Pancreas (tissue), 10 donors: ENCODE measurements at regions of chr2 and their contacts with region 1.

Region 1: DNA sequence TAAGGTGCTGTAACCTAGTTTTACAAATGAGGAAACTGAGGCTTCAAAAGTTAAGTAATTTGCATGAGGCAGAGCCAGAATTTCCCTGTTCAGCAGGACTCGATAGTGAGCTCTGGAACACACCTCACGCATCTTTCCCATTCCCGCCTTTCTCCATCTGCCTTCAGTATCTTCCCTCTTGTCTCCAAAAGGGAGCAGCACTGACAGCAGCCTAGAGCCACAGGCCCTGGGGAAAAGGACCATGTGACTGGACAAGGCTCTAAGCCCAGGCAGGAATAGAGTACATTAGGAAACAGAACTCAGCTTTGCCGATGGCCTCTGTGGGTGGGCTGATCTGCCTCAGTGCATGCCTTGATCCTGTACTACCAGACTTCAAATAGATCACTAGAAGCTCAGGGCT is 21.5 kb downstream of the GPR155 start:
- DNase-seq: no peak
- ATAC-seq: no peak
- H3K4me3 ChIP-seq: no peak overlapping the region
- H3K27ac ChIP-seq: no peak overlapping the region
- H3K4me1 ChIP-seq: no peaks in the 10 kb centered on the region
- H3K27me3 ChIP-seq: no peaks in the 10 kb centered on the region
- CTCF ChIP-seq: no peak

Region 2: GRCh38 chr2:174522553-174522952 is 57.2 kb after region 1 on chr2:
- intact Hi-C with region 1: loop called in 1 of 3 experiments (anchors 5 kb)
- DNase-seq: no peak
- ATAC-seq: peak in 3 of 4 donors; percentile 62 to 80 (median 76)
- H3K4me3 ChIP-seq: no peak overlapping the region
- H3K27ac ChIP-seq: peak overlapping the region in 1 of 4 donors; percentile 0
- H3K4me1 ChIP-seq: peaks cover 0 to 6% (median 0%) of the 10 kb centered on the region in 3 donors
- H3K27me3 ChIP-seq: no peaks in the 10 kb centered on the region
- CTCF ChIP-seq: peak in 1 of 4 donors; percentile 24

Region 3: GRCh38 chr2:174688079-174688478 is 222.8 kb after region 1 on chr2:
- intact Hi-C with region 1: loop called in 1 of 3 experiments (anchors 5 kb)
- DNase-seq: no peak
- ATAC-seq: peak; percentile 31 to 63 (median 50)
- H3K4me3 ChIP-seq: no peak overlapping the region
- H3K27ac ChIP-seq: no peak overlapping the region
- H3K4me1 ChIP-seq: no peaks in the 10 kb centered on the region
- H3K27me3 ChIP-seq: no peaks in the 10 kb centered on the region
- CTCF ChIP-seq: peak in 2 of 4 donors; percentile 8 to 29